ENCODE measurements at regions of chr14 and their contacts with region 1.

Region 1: DNA sequence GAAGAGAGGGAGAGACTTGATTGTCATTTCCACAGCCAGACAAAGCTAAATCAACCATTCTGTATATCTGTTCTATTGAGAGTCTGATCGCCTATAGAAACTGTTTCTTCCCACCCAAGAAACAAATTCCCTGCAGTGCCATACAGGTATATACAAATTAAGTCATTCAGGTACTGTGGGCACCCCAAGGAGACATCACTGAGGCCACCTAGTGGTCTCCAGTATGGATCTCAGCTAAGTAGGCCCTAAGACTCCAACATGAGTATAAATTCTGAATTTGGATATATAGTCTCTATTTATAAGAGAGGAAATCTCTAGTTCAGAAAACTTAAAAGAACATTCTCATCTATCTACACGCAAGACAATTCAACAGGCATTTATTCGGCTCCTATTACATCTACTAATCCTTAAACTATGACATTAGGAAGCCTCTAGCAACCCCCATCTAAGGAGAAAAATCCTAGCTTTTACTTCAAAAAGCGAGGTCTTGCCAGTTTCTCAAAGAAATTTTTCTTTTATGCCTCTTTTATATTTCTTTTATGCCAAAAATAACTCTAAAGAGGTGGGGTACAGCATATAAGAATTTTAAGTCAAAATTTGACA is 62.6 kb downstream of the DCAF5 start:
- DNase-seq: peak; percentile 82
- ATAC-seq: peak; percentile 76
- H3K4me3 ChIP-seq: no peak overlapping the region
- H3K27ac ChIP-seq: no peak overlapping the region
- H3K4me1 ChIP-seq: peaks cover 12% of the 10 kb centered on the region
- H3K27me3 ChIP-seq: no peaks in the 10 kb centered on the region
- CTCF ChIP-seq: peak; percentile 97

Region 2: GRCh38 chr14:68408680-68409079 is 681.6 kb before region 1 on chr14:
- CTCF ChIA-PET with region 1: interaction called, 13 read pairs
- POLR2A ChIA-PET with region 1: no interaction called
- intact Hi-C with region 1: no loop called
- DNase-seq: peak; percentile 63
- ATAC-seq: peak; percentile 59
- H3K4me3 ChIP-seq: no peak overlapping the region
- H3K27ac ChIP-seq: peak overlapping the region; percentile 22; the same call in 1 of the 2 replicates
- H3K4me1 ChIP-seq: peaks cover 56% of the 10 kb centered on the region
- H3K27me3 ChIP-seq: no peaks in the 10 kb centered on the region
- CTCF ChIP-seq: peak; percentile 63

Region 3: DNA sequence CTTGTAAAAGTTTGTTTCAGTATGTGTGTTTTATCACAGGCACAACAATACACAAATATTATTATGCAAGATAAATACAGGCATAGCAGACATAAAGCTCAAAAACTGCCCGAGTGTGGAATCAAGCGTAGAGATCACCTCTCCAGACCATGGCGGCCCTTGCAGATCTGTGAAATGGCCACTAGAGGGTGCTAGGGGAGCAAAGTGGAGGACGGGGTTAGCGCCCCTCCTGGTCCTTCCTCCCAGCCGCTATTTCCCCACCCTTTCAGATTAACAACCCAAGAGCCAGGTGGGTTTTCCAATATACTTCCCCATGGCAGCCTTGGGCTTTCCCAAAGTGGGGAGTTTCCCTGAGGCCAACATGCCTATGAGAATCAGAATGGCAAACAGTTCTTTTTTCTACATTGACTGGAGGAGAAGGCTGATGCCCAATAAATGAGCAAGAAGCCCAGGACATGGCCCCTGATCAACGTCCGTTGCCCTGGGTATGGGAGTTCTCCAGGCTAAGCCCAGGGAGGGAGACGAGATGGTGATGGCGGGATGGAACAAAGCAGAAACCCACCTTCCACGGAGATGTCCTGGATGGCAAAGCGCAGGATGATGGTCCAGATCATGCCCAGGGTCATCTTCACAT is 178.6 kb before region 1 on chr14:
- CTCF ChIA-PET with region 1: interaction called, 6 read pairs
- POLR2A ChIA-PET with region 1: no interaction called
- intact Hi-C with region 1: loop called (anchors 1 kb)
- DNase-seq: peak; percentile 91
- ATAC-seq: peak; percentile 91
- H3K4me3 ChIP-seq: no peak overlapping the region
- H3K27ac ChIP-seq: no peak overlapping the region
- H3K4me1 ChIP-seq: no peaks in the 10 kb centered on the region
- H3K27me3 ChIP-seq: no peaks in the 10 kb centered on the region
- CTCF ChIP-seq: peak; percentile 99

Region 4: GRCh38 chr14:69005432-69006147 is 84.7 kb before region 1 on chr14:
- CTCF ChIA-PET with region 1: no interaction called
- POLR2A ChIA-PET with region 1: no interaction called
- intact Hi-C with region 1: loop called (anchors 5 kb)
- DNase-seq: peak; percentile 91
- ATAC-seq: peak; percentile 90
- H3K4me3 ChIP-seq: peak overlapping the region; percentile 30; the same call in 1 of the 2 replicates
- H3K27ac ChIP-seq: peak overlapping the region; percentile 43
- H3K4me1 ChIP-seq: peaks cover 30% of the 10 kb centered on the region
- H3K27me3 ChIP-seq: no peaks in the 10 kb centered on the region
- CTCF ChIP-seq: no peak

Region 5: DNA sequence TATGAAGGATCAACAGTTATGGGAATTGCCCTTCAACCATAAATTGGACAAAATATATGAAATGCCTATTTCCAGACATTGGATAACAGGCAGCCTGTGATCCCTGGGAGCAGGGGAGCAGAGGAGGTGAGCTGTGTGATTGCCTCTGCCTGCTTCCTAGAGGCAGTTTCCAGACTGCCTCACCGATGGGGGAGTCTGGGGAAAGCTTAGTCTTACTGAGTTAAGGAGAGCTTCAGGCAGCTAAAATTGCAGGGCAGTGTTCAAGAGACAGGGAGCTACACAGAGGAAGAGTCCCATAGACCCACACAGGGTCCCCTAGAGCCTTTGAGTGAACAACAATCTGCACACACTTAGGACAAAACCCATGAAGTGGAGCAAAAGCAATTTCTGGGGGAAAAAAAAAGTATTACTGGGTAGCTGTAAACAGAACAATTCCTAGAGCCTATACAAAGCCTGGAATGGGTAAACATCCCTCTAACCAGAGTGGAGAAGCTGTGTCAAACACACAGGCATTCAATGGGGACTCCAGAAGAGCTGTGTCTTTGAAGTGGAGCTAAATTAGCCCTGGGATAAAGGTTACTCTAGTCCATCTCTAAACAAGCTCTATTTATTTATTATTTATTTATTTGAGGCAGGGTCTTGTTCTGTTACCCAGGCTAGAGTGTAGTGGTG is 62.9 kb before region 1 on chr14:
- CTCF ChIA-PET with region 1: no interaction called
- POLR2A ChIA-PET with region 1: no interaction called
- intact Hi-C with region 1: no loop called
- DNase-seq: no peak
- ATAC-seq: peak; percentile 37; the same call in 1 of the 2 replicates
- H3K4me3 ChIP-seq: no peak overlapping the region
- H3K27ac ChIP-seq: no peak overlapping the region
- H3K4me1 ChIP-seq: no peaks in the 10 kb centered on the region
- H3K27me3 ChIP-seq: no peaks in the 10 kb centered on the region
- CTCF ChIP-seq: no peak

Region 6: DNA sequence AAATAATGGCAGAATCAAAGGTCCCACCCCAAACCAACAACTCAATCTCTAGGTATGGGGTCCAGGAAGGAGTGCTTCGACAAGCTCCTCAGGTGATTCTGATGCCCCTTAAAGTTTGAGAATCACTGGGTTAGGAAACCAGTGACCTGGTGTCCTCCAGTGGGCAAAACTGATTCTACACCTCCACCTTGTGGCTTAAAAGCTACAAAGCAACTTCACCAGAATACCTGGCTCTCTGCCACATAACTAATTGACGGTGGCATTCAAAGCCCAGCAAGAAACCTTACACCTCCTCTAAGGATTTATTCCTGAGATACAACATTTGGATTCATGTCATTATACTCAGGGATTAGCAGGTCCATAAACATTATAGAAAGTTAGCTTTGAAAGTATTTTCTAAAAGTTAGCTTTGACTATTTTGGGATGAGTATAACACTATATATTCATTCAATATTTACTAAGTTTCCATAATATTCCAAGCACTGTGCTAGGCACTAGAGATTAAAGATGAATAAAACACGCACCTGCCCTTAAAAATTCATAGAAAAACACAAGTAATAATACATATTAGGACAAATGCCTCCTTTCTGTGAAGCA is 17.2 kb after region 1 on chr14:
- CTCF ChIA-PET with region 1: interaction called, 5 read pairs
- POLR2A ChIA-PET with region 1: no interaction called
- intact Hi-C with region 1: loop called (anchors 2 kb)
- DNase-seq: peak; percentile 85
- ATAC-seq: peak; percentile 67
- H3K4me3 ChIP-seq: no peak overlapping the region
- H3K27ac ChIP-seq: no peak overlapping the region
- H3K4me1 ChIP-seq: no peaks in the 10 kb centered on the region
- H3K27me3 ChIP-seq: no peaks in the 10 kb centered on the region
- CTCF ChIP-seq: peak; percentile 94